Caco-2 (cell line): ENCODE measurements at regions of chr4 and their contacts with region 1.

Region 1: GRCh38 chr4:155787113-155787710 is 28.4 kb downstream of the GUCY1B1 start:
- DNase-seq: peak in 1 of 2 experiments; percentile 49
- H3K4me3 ChIP-seq: no peak overlapping the region
- H3K4me3 Mint-ChIP-seq: no peak overlapping the region
- H3K27ac Mint-ChIP-seq: no peak overlapping the region
- H3K4me1 ChIP-seq: peaks cover 6% of the 10 kb centered on the region; the same call in 1 of the 2 replicates
- H3K4me1 Mint-ChIP-seq: no peaks in the 10 kb centered on the region
- H3K27me3 ChIP-seq: no peaks in the 10 kb centered on the region
- H3K27me3 Mint-ChIP-seq: no peaks in the 10 kb centered on the region
- CTCF ChIP-seq: peak; percentile 50 to 77

Region 2: DNA sequence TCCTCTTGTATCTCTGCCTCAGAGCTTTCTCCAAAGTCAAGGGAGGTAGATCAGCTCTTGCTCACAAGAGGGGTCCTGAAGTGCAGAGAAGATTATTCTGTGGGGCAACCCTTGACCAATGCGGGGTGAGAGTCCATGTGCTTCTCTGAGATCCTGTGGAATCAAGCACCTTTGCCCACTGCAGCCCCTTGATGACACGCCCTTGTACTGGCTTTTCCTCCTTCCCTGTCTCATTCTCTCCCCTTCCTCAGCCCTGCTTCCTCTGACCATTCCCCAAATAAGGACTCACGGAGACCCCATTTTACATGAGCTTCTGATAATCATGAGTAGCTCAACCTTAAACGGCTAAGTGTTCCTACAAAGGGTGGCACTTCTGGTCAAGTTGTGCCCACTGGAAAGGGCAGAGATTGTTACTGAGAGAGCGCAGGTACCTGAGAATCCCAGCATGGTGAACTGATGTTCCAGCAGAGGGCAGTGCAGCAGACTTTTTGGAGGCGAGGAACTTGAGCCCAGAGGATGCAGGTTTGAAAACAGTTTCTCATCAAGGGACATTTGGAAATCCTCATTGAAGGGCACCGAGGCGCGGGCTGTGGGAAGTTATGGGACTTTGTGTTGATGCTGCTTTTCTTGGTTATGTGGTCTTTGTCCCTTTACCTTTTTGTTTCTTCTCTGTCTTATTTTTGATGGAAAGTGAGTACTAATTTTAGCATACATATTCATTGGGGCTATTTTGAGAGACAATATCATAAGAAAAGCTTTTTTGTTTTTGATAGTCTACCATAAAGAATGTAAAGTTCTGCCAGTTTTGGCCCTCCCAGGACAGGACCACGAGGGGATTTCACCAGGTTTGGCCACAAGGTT is 804.8 kb before region 1 on chr4:
- CTCF ChIA-PET with region 1: no interaction called
- POLR2A ChIA-PET with region 1: no interaction called
- intact Hi-C with region 1: loop called (anchors 10 kb)
- DNase-seq: peak; percentile 52 to 55
- H3K4me3 ChIP-seq: no peak overlapping the region
- H3K4me3 Mint-ChIP-seq: no peak overlapping the region
- H3K27ac Mint-ChIP-seq: no peak overlapping the region
- H3K4me1 ChIP-seq: no peaks in the 10 kb centered on the region
- H3K4me1 Mint-ChIP-seq: no peaks in the 10 kb centered on the region
- H3K27me3 ChIP-seq: no peaks in the 10 kb centered on the region
- H3K27me3 Mint-ChIP-seq: peaks cover 21% of the 10 kb centered on the region
- CTCF ChIP-seq: peak; percentile 51 to 64

Region 3: GRCh38 chr4:155403886-155404285 is 383.3 kb before region 1 on chr4:
- CTCF ChIA-PET with region 1: interaction called, 5 read pairs
- POLR2A ChIA-PET with region 1: no interaction called
- intact Hi-C with region 1: loop called (anchors 1 kb)
- DNase-seq: peak in 1 of 2 experiments; percentile 20
- H3K4me3 ChIP-seq: no peak overlapping the region
- H3K4me3 Mint-ChIP-seq: no peak overlapping the region
- H3K27ac Mint-ChIP-seq: no peak overlapping the region
- H3K4me1 ChIP-seq: peaks cover 18% of the 10 kb centered on the region
- H3K4me1 Mint-ChIP-seq: peaks cover 18% of the 10 kb centered on the region
- H3K27me3 ChIP-seq: no peaks in the 10 kb centered on the region
- H3K27me3 Mint-ChIP-seq: no peaks in the 10 kb centered on the region
- CTCF ChIP-seq: peak in 1 of 2 experiments; percentile 28

Region 4: GRCh38 chr4:155442267-155443105 is 344.7 kb before region 1 on chr4:
- CTCF ChIA-PET with region 1: interaction called, 6 read pairs
- POLR2A ChIA-PET with region 1: no interaction called
- intact Hi-C with region 1: loop called (anchors 1 kb)
- DNase-seq: peak; percentile 50 to 72
- H3K4me3 ChIP-seq: no peak overlapping the region
- H3K4me3 Mint-ChIP-seq: no peak overlapping the region
- H3K27ac Mint-ChIP-seq: no peak overlapping the region
- H3K4me1 ChIP-seq: no peaks in the 10 kb centered on the region
- H3K4me1 Mint-ChIP-seq: peaks cover 8% of the 10 kb centered on the region
- H3K27me3 ChIP-seq: no peaks in the 10 kb centered on the region
- H3K27me3 Mint-ChIP-seq: no peaks in the 10 kb centered on the region
- CTCF ChIP-seq: peak; percentile 84 to 88

Region 5: DNA sequence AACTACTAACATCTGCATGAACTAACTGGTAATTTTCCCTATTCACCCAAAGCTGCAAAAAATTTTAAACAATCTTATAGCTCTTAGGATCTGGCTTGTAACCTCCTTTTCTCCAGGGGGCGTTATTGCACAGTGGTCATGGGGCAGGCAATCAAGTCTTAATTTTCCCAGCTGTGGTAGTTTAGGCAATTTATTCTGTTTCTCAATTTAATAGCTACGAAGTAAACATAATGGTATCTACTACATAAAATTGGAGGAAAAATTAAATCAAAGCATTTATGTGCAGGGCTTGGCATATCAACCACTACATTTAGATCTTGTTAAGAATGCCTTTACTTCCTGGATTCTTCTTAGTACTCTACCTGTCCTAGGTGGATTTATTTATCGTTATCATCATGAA is 257.9 kb before region 1 on chr4:
- CTCF ChIA-PET with region 1: interaction called, 4 read pairs
- POLR2A ChIA-PET with region 1: no interaction called
- intact Hi-C with region 1: loop called (anchors 1 kb)
- DNase-seq: peak in 1 of 2 experiments; percentile 12
- H3K4me3 ChIP-seq: no peak overlapping the region
- H3K4me3 Mint-ChIP-seq: no peak overlapping the region
- H3K27ac Mint-ChIP-seq: no peak overlapping the region
- H3K4me1 ChIP-seq: no peaks in the 10 kb centered on the region
- H3K4me1 Mint-ChIP-seq: no peaks in the 10 kb centered on the region
- H3K27me3 ChIP-seq: no peaks in the 10 kb centered on the region
- H3K27me3 Mint-ChIP-seq: no peaks in the 10 kb centered on the region
- CTCF ChIP-seq: peak in 1 of 2 experiments; percentile 20

Region 6: GRCh38 chr4:155675709-155676429 is 111.3 kb before region 1 on chr4:
- CTCF ChIA-PET with region 1: no interaction called
- POLR2A ChIA-PET with region 1: no interaction called
- intact Hi-C with region 1: loop called (anchors 10 kb)
- DNase-seq: peak; percentile 34 to 40
- H3K4me3 ChIP-seq: no peak overlapping the region
- H3K4me3 Mint-ChIP-seq: no peak overlapping the region
- H3K27ac Mint-ChIP-seq: peak overlapping the region; percentile 60
- H3K4me1 ChIP-seq: peaks cover 45% of the 10 kb centered on the region
- H3K4me1 Mint-ChIP-seq: peaks cover 43% of the 10 kb centered on the region
- H3K27me3 ChIP-seq: no peaks in the 10 kb centered on the region
- H3K27me3 Mint-ChIP-seq: no peaks in the 10 kb centered on the region
- CTCF ChIP-seq: no peak

Region 7: GRCh38 chr4:155696226-155696625 is 91.0 kb before region 1 on chr4:
- CTCF ChIA-PET with region 1: no interaction called
- POLR2A ChIA-PET with region 1: no interaction called
- intact Hi-C with region 1: loop called (anchors 5 kb)
- DNase-seq: no peak
- H3K4me3 ChIP-seq: no peak overlapping the region
- H3K4me3 Mint-ChIP-seq: no peak overlapping the region
- H3K27ac Mint-ChIP-seq: no peak overlapping the region
- H3K4me1 ChIP-seq: peaks cover 6% of the 10 kb centered on the region; the same call in 1 of the 2 replicates
- H3K4me1 Mint-ChIP-seq: peaks cover 7% of the 10 kb centered on the region
- H3K27me3 ChIP-seq: no peaks in the 10 kb centered on the region
- H3K27me3 Mint-ChIP-seq: no peaks in the 10 kb centered on the region
- CTCF ChIP-seq: no peak

Region 8: GRCh38 chr4:155707251-155707650 is 80.0 kb before region 1 on chr4:
- CTCF ChIA-PET with region 1: no interaction called
- POLR2A ChIA-PET with region 1: no interaction called
- intact Hi-C with region 1: no loop called
- DNase-seq: no peak
- H3K4me3 ChIP-seq: no peak overlapping the region
- H3K4me3 Mint-ChIP-seq: no peak overlapping the region
- H3K27ac Mint-ChIP-seq: no peak overlapping the region
- H3K4me1 ChIP-seq: peaks cover 38% of the 10 kb centered on the region
- H3K4me1 Mint-ChIP-seq: peaks cover 22% of the 10 kb centered on the region
- H3K27me3 ChIP-seq: no peaks in the 10 kb centered on the region
- H3K27me3 Mint-ChIP-seq: no peaks in the 10 kb centered on the region
- CTCF ChIP-seq: no peak

Region 9: DNA sequence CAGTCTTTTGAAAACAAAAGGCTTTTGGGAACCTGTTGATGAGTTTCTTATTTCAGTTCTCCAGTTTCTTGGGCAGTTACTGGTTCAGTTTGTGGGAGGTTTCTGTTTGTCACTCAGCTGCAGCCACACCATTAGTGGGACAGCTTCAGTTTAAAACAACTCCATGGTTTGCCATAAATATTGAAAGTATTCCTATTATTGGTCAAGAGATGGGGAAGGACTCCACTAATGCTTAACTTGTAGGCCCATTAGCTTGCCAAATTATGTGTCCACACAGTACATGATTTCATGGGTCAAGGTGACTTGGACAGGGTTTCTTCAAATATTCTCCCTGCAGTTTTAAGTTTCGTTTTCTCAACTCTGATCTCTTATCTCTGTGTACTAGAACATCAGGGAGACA is 94.3 kb after region 1 on chr4:
- CTCF ChIA-PET with region 1: no interaction called
- POLR2A ChIA-PET with region 1: no interaction called
- intact Hi-C with region 1: no loop called
- DNase-seq: no peak
- H3K4me3 ChIP-seq: no peak overlapping the region
- H3K4me3 Mint-ChIP-seq: no peak overlapping the region
- H3K27ac Mint-ChIP-seq: no peak overlapping the region
- H3K4me1 ChIP-seq: no peaks in the 10 kb centered on the region
- H3K4me1 Mint-ChIP-seq: no peaks in the 10 kb centered on the region
- H3K27me3 ChIP-seq: no peaks in the 10 kb centered on the region
- H3K27me3 Mint-ChIP-seq: no peaks in the 10 kb centered on the region
- CTCF ChIP-seq: no peak